H1 (cell line): ENCODE measurements at regions of chr21 and their contacts with region 1.

Region 1: GRCh38 chr21:30234643-30235042 is 18.7 kb upstream of the CLDN8 start:
- DNase-seq: no peak
- H3K4me3 ChIP-seq: no peak overlapping the region
- H3K27ac ChIP-seq: no peak overlapping the region
- H3K4me1 ChIP-seq: no peaks in the 10 kb centered on the region
- H3K27me3 ChIP-seq: no peaks in the 10 kb centered on the region
- CTCF ChIP-seq: no peak
- EP300 ChIP-seq: no peak
- POLR2A ChIP-seq: no peak
- RAD21 ChIP-seq: no peak

Region 2: DNA sequence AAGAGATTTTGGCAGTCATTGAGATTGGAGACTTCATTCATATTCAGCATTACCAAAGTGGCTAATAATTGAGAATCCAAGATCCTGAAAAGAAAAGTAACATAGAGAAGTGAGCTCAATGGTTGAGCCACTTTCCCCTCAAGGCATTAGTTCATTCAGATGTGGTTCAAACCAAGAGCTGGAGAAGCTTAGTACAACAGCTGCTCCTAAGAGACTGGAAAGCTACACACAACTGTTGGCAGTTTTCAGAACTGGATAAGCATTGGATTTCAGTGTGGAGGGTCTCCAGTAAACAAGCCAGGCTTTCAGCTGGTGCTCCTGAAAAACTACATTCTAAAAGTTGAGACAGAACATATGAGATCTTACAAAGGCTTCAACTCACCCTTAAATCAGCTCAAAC is 10.4 kb after region 1 on chr21:
- CTCF ChIA-PET with region 1: interaction called, 13 read pairs
- POLR2A ChIA-PET with region 1: no interaction called
- DNase-seq: no peak
- H3K4me3 ChIP-seq: no peak overlapping the region
- H3K27ac ChIP-seq: no peak overlapping the region
- H3K4me1 ChIP-seq: no peaks in the 10 kb centered on the region
- H3K27me3 ChIP-seq: no peaks in the 10 kb centered on the region
- CTCF ChIP-seq: no peak
- EP300 ChIP-seq: no peak
- POLR2A ChIP-seq: no peak
- RAD21 ChIP-seq: no peak